K562 (cell line): ENCODE measurements at regions of chr18 and their contacts with region 1.

Region 1: DNA sequence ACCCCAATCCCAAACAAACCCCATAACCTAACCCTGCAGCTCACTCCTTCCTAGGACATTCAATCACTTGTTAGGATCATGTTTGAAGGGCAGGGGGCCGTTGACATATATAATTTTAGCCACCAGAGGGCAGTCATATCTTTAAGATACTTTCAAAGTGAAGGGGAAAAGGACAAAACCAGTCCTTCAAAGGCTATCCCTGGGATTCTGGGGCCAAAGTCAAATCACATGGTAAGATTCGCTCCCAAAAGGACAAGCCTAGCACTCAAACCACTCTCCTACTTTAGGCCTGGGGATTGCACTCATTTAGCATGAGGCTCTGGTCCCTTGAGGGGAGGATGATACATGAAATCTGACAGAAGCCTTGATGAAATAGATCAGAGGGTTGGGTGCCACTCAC is 44.6 kb downstream of the HAUS1 start:
- DNase-seq: peak; percentile 38 to 72 (median 47)
- ATAC-seq: peak; percentile 55
- H3K4me3 ChIP-seq: no peak overlapping the region
- H3K27ac ChIP-seq: no peak overlapping the region
- H3K4me1 ChIP-seq: peaks cover 12 to 17% of the 10 kb centered on the region in 2 experiments; a peak in 4 of 5 replicates
- H3K27me3 ChIP-seq: no peaks in the 10 kb centered on the region
- CTCF ChIP-seq: peak; percentile 54 to 73 (median 60)
- EP300 ChIP-seq: no peak
- POLR2A ChIP-seq: no peak
- RAD21 ChIP-seq: peak; percentile 67 to 81

Region 2: DNA sequence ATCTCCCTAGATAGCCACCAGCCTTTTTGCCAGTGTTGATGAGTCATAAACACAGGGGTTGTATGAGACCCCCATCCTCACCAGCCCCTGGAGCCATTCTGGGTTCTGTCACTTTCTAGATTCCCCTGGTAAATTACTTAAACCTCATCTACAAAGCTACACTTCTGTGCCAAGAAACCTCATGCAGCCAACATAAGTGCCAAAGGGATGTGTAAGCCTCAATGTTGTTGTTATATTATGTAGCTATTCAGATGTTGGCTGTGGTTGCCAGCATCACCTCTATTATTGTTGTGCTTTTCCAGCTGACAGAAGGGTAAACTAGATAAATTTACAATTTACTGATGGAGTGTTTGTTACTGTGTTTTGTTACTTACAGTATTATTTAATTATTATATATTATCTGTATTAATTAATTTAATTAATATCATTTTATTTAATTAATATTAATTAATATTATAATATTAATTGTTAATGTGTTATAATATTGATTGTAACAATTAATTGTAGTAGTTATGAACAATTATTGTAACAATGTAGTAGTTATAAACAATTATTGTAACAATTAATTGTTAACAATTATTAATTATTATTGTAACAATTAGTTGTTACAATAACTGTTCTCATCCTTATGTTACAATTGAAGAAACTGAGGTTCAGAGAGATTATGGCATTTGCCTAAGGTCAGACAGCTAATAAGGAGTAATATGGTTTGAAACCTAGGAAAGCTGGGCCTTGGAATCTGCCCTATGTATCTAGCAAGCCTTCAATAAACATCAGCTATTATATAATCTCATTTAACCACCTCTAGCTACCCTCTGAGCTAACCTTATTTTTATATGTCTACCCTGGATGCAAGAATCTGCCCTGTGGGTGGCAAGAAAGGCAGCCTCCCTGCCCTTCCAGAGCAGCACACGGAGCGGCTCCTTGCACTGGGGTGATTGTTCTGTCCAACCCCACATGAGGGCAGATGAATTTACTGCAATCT is 112.8 kb before region 1 on chr18:
- CTCF ChIA-PET with region 1: no interaction called
- POLR2A ChIA-PET with region 1: no interaction called
- in situ Hi-C with region 1: no loop called
- intact Hi-C with region 1: no loop called
- DNase-seq: no peak
- ATAC-seq: no peak
- H3K4me3 ChIP-seq: no peak overlapping the region
- H3K27ac ChIP-seq: no peak overlapping the region
- H3K4me1 ChIP-seq: peaks cover 7 to 18% of the 10 kb centered on the region in 2 experiments; a peak in 4 of 5 replicates
- H3K27me3 ChIP-seq: no peaks in the 10 kb centered on the region
- CTCF ChIP-seq: no peak
- EP300 ChIP-seq: no peak
- POLR2A ChIP-seq: no peak
- RAD21 ChIP-seq: no peak

Region 3: GRCh38 chr18:46213295-46213694 is 64.5 kb after region 1 on chr18:
- CTCF ChIA-PET with region 1: no interaction called
- POLR2A ChIA-PET with region 1: interaction called, 3 read pairs
- in situ Hi-C with region 1: no loop called
- intact Hi-C with region 1: loop called (anchors 2 kb)
- DNase-seq: peak in 3 of 4 experiments; percentile 9 to 20 (median 13)
- ATAC-seq: no peak
- H3K4me3 ChIP-seq: no peak overlapping the region
- H3K27ac ChIP-seq: no peak overlapping the region
- H3K4me1 ChIP-seq: peaks cover 0 to 3% of the 10 kb centered on the region in 2 experiments; a peak in 3 of 5 replicates
- H3K27me3 ChIP-seq: no peaks in the 10 kb centered on the region
- CTCF ChIP-seq: peak; percentile 23 to 58 (median 25); a peak in 3 of 6 replicates
- EP300 ChIP-seq: no peak
- POLR2A ChIP-seq: no peak
- RAD21 ChIP-seq: peak; percentile 24 to 48

Region 4: GRCh38 chr18:46281185-46282176 is 132.7 kb after region 1 on chr18:
- CTCF ChIA-PET with region 1: interaction called, 3 read pairs
- POLR2A ChIA-PET with region 1: no interaction called
- in situ Hi-C with region 1: no loop called
- intact Hi-C with region 1: loop called (anchors 5 kb)
- DNase-seq: peak; percentile 48 to 68 (median 62)
- ATAC-seq: peak; percentile 90
- H3K4me3 ChIP-seq: no peak overlapping the region
- H3K27ac ChIP-seq: no peak overlapping the region
- H3K4me1 ChIP-seq: peaks cover 0 to 9% of the 10 kb centered on the region in 2 experiments; a peak in 1 of 5 replicates
- H3K27me3 ChIP-seq: peaks cover 5 to 10% of the 10 kb centered on the region in 2 experiments; a peak in 3 of 5 replicates
- CTCF ChIP-seq: peak; percentile 71 to 78 (median 73)
- EP300 ChIP-seq: no peak
- POLR2A ChIP-seq: no peak
- RAD21 ChIP-seq: peak; percentile 62 to 77; a peak in 3 of 4 replicates

Region 5: DNA sequence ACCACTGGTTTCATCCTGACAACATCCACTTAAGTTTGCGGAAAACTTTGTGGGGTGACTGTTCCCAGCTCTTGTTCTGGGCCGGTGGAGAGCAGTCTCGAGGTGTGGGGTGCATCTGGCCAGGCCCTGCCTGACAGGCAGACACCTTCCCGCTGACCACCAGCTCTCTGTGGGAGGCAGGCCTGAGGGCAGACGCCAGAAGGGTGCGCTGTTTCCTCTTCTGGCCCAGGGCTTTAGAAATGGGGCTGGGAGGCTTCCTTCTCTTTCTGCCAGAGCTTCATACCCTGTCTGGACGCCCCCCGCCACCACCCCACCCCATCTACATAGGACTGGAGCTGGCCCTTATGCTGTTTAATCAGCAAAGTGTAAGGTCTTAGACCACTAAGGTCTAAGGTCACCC is 244.4 kb after region 1 on chr18:
- CTCF ChIA-PET with region 1: no interaction called
- POLR2A ChIA-PET with region 1: no interaction called
- in situ Hi-C with region 1: no loop called
- intact Hi-C with region 1: loop called (anchors 10 kb)
- DNase-seq: peak; percentile 37 to 48 (median 40)
- ATAC-seq: peak; percentile 93
- H3K4me3 ChIP-seq: no peak overlapping the region
- H3K27ac ChIP-seq: no peak overlapping the region
- H3K4me1 ChIP-seq: no peaks in the 10 kb centered on the region; a peak in 4 of 5 replicates
- H3K27me3 ChIP-seq: peaks cover 0 to 16% of the 10 kb centered on the region in 2 experiments; a peak in 2 of 5 replicates
- CTCF ChIP-seq: peak; percentile 62 to 73 (median 69)
- EP300 ChIP-seq: no peak
- POLR2A ChIP-seq: no peak
- RAD21 ChIP-seq: peak; percentile 61 to 78

Region 6: DNA sequence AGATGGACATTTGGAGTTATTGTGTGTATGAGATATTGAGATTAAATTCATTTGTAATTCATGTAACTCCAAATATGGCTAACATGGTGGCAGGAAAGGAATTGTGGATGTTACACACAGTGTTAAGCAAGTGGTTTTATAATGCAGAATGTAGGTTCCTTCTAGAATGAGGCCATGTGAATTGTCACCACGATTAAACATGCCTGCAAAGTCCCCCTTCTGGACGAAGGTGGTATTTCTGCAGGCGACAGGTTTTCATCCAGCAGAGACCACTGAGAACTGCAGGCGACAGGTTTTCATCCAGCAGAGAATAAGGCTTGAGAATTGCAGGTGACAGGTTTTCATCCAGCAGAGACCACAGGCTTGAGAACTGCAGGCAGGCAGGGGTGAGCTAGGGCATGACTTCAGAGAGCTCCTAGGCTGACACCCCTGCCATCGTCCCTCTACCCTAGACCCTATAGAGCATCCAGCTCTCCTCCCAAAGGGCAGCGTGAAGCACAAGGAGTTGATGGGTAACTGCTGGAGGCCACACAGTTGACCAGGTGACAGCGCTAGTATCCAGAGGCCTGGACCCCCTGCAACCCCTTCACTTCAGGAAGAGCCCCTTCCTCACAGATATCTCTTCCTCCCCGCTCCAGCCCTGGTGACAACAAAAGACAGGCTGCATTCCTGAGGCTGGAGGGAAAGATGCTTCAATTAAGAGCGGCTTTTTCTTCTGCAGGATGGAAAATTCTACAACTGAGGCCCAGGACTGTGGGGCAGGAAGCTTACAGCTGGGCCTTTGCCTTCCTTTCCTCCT is 332.4 kb after region 1 on chr18:
- CTCF ChIA-PET with region 1: interaction called, 4 read pairs
- POLR2A ChIA-PET with region 1: no interaction called
- in situ Hi-C with region 1: loop called (anchors 10 kb)
- intact Hi-C with region 1: loop called (anchors 5 kb)
- DNase-seq: peak; percentile 30 to 56 (median 38)
- ATAC-seq: peak; percentile 85
- H3K4me3 ChIP-seq: no peak overlapping the region
- H3K27ac ChIP-seq: no peak overlapping the region
- H3K4me1 ChIP-seq: no peaks in the 10 kb centered on the region
- H3K27me3 ChIP-seq: peaks cover 0 to 7% of the 10 kb centered on the region in 2 experiments; a peak in 2 of 5 replicates
- CTCF ChIP-seq: peak; percentile 66 to 68 (median 67)
- EP300 ChIP-seq: no peak
- POLR2A ChIP-seq: no peak
- RAD21 ChIP-seq: peak; percentile 40 to 75

Region 7: GRCh38 chr18:46660955-46661749 is 512.3 kb after region 1 on chr18:
- CTCF ChIA-PET with region 1: interaction called, 3 read pairs
- POLR2A ChIA-PET with region 1: no interaction called
- in situ Hi-C with region 1: loop called (anchors 5 kb)
- intact Hi-C with region 1: loop called (anchors 2 kb)
- DNase-seq: no peak
- ATAC-seq: no peak
- H3K4me3 ChIP-seq: no peak overlapping the region
- H3K27ac ChIP-seq: no peak overlapping the region
- H3K4me1 ChIP-seq: peaks cover 0 to 4% of the 10 kb centered on the region in 2 experiments; a peak in 2 of 5 replicates
- H3K27me3 ChIP-seq: peaks cover 0 to 10% of the 10 kb centered on the region in 2 experiments; a peak in 2 of 5 replicates
- CTCF ChIP-seq: no peak
- EP300 ChIP-seq: no peak
- POLR2A ChIP-seq: no peak
- RAD21 ChIP-seq: no peak